Ascending aorta (tissue), 2 donors: ENCODE measurements at regions of chrX and their contacts with region 1.

Region 1: DNA sequence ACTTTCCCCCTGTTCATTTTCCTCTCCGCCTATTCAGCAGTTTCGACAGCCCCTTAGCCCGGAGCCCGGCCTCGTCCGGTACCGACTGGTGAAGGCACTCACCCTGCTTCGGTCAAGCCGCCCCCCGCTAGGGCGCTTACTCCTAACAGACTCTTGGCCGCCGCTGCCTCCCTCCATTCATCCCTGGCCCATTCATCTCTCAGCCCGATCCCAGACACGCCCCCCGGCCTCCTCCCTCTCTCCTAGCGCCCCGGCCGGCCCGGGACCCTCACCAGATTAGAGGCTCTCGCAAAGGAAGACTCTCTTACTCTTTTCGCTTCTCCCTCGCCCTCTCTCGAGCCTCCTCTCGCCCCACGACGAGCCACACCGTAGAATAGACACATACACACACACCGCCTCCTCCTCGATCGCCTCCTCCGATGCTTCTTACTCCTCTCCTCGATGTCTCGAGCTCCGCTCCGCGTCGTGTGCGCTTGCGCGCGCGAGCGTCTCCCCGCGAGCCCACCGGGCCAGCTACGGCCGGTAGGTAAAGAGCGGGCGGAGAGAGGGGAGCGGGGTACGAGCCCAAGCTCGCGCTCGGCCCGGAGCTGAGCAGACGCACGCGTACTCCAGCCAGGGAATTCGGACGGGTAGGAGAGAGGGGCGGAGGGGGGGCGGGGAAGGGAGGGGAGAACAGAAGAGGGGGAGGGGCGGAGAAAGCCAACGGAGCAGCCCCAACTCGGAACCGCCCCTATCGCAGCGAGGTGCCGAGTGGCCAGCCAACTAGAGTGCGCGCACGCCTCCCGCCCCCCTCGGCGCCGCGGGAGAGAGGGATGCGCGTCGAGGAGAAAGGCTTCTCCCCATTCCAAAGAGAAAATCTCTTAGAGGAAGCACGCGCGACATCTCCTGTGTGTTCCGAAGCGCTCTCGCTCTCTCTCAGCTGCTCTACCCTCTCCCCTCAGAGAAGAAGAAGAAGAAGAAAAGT is at the start of gene WNK3:
- DNase-seq: peak; percentile 18 to 86
- H3K4me3 ChIP-seq: peak within 1 kb of the TSS; percentile 56 to 67
- H3K27ac ChIP-seq: peak within 1 kb of the TSS; percentile 84 to 86
- H3K4me1 ChIP-seq: no peaks in the 10 kb centered on the region
- H3K27me3 ChIP-seq: no peaks in the 10 kb centered on the region
- CTCF ChIP-seq: no peak
- total RNA-seq, gene WNK3: 3.3 TPM

Region 2: DNA sequence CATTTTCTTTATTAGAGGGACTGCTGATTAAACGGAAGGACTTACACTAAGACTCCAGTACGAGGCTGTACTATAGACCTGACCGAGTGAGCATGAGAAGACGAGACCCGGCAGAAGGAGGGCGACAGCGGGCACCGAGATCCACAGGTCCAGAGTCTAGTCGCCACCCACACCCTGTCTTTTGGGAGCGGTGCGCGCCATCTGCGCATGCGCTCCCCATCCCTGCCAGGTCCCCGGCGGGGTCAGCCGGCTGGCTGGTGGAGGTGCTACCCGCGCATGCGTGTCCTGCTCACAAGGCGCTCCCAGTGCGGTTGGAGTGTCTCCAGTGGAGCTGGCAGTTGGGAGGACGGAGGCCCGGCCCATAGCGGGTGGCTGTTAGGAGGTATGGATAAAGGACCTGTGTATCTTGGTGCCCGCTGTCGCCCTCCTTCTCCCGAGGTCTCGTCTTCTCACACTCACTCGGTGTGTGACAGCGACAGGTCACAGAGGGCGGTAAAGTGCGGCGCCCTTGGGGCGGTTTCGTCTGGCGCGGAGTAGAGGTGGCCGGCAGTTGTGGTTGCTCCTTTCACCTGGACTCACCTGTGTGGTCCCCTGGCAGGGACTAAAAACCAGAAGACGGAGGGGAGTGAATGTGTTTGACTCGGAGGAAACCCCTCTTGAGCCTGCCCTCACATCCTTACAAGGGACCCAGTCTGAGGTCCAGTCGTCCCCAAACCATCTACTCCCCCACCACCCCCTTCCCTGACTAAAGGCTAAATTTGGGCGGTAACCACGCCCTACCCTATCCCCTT is 916.0 kb before region 1 on chrX:
- intact Hi-C with region 1: loop called (anchors 5 kb)
- DNase-seq: peak; percentile 23 to 88
- H3K4me3 ChIP-seq: peak overlapping the region; percentile 44 to 56
- H3K27ac ChIP-seq: peak overlapping the region in 1 of 2 donors; percentile 0
- H3K4me1 ChIP-seq: peaks cover 0 to 4% of the 10 kb centered on the region in 2 donors
- H3K27me3 ChIP-seq: no peaks in the 10 kb centered on the region
- CTCF ChIP-seq: no peak

Region 3: GRCh38 chrX:54044126-54044876 is 313.4 kb before region 1 on chrX and contains the start of gene PHF8:
- intact Hi-C with region 1: loop called (anchors 1 kb)
- DNase-seq: peak; percentile 78 to 97
- H3K4me3 ChIP-seq: peak within 1 kb of the TSS; percentile 64 to 73
- H3K27ac ChIP-seq: peak within 1 kb of the TSS; percentile 85 to 96
- H3K4me1 ChIP-seq: no peaks in the 10 kb centered on the region
- H3K27me3 ChIP-seq: no peaks in the 10 kb centered on the region
- CTCF ChIP-seq: no peak
- total RNA-seq, gene PHF8: 41.6 TPM

Region 4: GRCh38 chrX:54182864-54183608 is 174.7 kb before region 1 on chrX and contains the start of gene FAM120C:
- intact Hi-C with region 1: loop called (anchors 5 kb)
- DNase-seq: peak in 1 of 2 donors; percentile 73
- H3K4me3 ChIP-seq: peak within 1 kb of the TSS; percentile 69 to 78
- H3K27ac ChIP-seq: peak within 1 kb of the TSS; percentile 86 to 91
- H3K4me1 ChIP-seq: peaks cover 0 to 3% of the 10 kb centered on the region in 2 donors
- H3K27me3 ChIP-seq: no peaks in the 10 kb centered on the region
- CTCF ChIP-seq: no peak
- total RNA-seq, gene FAM120C: 1.6 TPM

Region 5: DNA sequence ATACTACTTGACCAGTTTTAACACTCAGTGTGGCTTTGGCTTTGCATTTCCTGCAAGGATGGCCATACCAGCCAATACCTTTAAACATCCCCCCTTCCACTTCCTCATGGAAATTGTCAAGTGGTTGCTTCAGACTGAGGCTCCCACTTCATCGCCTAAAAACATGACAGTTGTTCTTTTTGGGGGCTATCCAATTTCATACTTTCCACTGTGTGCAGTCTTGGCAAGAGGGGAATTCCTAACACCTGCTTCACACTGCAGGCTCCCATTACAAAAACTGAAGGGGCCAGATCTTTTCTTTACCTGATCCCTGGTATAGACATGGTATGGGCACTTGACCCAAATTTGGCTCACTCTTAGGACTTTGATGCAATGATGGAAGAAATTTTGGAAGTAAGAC is 54.0 kb after region 1 on chrX:
- intact Hi-C with region 1: no loop called
- DNase-seq: no peak
- H3K4me3 ChIP-seq: no peak overlapping the region
- H3K27ac ChIP-seq: no peak overlapping the region
- H3K4me1 ChIP-seq: no peaks in the 10 kb centered on the region
- H3K27me3 ChIP-seq: no peaks in the 10 kb centered on the region
- CTCF ChIP-seq: no peak

Region 6: DNA sequence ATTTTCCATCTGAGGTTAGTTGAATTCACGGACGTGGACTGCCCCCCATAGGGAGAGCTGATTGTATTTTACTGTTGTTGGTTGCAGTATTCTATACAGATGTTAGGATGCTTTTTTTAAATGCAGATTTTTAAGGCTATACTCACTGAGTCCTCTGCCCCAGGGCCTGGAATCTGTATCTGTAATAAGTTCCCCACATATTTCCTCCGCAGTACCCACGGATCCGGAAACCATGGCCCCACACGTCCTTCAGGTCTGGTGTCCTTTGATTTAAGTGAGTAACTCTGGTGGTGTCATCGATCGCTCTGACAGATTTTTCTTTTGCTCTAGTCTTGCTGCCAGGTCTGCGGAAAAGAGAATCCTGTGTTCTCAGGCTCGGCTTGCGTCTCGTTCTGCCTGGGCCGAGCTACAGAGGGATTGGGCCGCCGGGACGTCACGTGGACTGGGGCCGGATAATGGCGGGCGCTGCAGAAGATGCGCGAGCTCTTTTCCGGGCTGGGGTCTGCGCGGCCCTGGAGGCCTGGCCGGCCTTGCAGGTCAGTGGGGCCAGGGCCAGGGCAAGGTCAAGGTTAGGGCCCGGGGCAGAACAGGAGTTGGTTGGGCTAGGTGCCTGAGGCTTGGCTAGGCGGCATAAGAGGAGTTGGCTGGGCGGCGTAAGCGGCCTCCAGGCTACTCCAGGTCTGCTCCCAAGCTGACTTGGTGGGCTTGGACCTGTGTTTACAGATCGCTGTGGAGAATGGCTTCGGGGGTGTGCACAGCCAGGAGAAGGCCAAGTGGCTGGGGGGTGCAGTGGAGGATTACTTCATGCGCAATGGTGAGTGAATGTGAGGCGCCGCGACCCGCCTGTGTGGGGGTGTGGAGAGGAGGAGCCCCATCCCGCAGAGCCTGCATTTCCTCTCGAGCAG is 82.5 kb after region 1 on chrX and contains the start of gene TSR2:
- intact Hi-C with region 1: loop called (anchors 1 kb)
- DNase-seq: peak; percentile 63 to 88
- H3K4me3 ChIP-seq: peak within 1 kb of the TSS; percentile 54 to 89
- H3K27ac ChIP-seq: peak within 1 kb of the TSS; percentile 38 to 56
- H3K4me1 ChIP-seq: peaks cover 0 to 6% of the 10 kb centered on the region in 2 donors
- H3K27me3 ChIP-seq: no peaks in the 10 kb centered on the region
- CTCF ChIP-seq: peak in 1 of 3 experiments; percentile 26
- total RNA-seq, gene TSR2: 14.0 TPM

Region 7: GRCh38 chrX:54482839-54483593 is 125.3 kb after region 1 on chrX:
- intact Hi-C with region 1: loop called (anchors 5 kb)
- DNase-seq: no peak
- H3K4me3 ChIP-seq: peak overlapping the region; percentile 26 to 51
- H3K27ac ChIP-seq: peak overlapping the region; percentile 67 to 69
- H3K4me1 ChIP-seq: peaks cover 0 to 3% of the 10 kb centered on the region in 2 donors
- H3K27me3 ChIP-seq: no peaks in the 10 kb centered on the region
- CTCF ChIP-seq: no peak

Region 8: GRCh38 chrX:54529552-54530357 is 172.1 kb after region 1 on chrX and contains the start of gene GNL3L:
- intact Hi-C with region 1: loop called (anchors 2 kb)
- DNase-seq: peak; percentile 60 to 92
- H3K4me3 ChIP-seq: peak within 1 kb of the TSS; percentile 69 to 79
- H3K27ac ChIP-seq: peak within 1 kb of the TSS; percentile 65 to 73
- H3K4me1 ChIP-seq: no peaks in the 10 kb centered on the region
- H3K27me3 ChIP-seq: no peaks in the 10 kb centered on the region
- CTCF ChIP-seq: no peak
- total RNA-seq, gene GNL3L: 15.4 TPM